ENCODE measurements at regions of chr5 and their contacts with region 1.

Region 1: DNA sequence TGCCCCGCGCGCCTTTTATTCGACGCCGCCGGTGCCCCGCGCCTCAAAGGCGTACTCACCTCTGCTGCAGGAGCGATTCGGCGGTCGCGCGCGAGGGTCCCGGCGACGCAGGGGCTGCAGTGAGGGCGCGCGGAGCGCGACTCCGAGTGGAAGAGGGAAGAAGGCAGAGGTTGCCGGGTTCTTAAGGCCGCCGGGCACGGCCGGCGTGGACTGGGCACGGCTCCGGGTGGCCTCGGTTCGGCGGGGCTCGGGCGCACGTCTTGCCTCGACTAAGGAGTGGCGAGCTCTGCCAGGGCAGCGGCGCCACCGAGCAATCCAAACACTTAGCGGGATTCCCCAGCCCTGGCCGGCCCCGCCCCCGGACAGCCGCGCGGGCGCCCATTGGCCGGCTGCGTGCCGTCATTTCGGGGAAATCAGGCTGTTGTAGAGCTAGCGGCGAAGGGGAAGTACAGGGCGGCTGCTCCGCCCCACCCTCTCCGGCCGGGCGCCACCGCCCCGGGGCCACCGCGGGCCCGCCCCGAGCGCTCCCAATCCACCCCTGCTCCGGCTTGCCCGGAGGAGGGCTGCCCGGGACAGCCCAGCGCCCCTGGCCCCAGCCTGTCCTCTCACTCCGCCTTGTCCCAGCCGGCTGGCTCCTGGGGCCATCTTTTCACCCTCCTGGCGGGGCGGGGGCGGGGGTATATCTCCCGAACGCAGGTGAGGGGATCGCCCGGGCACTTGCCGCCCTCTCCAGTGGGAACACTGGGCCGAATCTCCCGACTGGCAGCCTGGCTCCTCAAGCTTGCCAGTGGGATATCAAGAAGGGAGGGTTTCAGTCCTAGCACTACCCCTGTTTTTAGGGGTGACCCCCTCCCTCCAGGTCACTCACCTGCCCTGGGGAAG is at the start of gene IRF1:
- DNase-seq: peak; percentile 97
- H3K4me3 ChIP-seq: peak within 1 kb of the TSS; percentile 67 to 93 (median 87)
- H3K27ac ChIP-seq: peak within 1 kb of the TSS; percentile 92 to 99 (median 97)
- H3K4me1 ChIP-seq: peaks cover 33 to 60% of the 10 kb centered on the region in 2 donors
- H3K27me3 ChIP-seq: no peaks in the 10 kb centered on the region
- CTCF ChIP-seq: no peak
- POLR2A ChIP-seq: peak; percentile 87 to 99
- total RNA-seq, gene IRF1: 24.6 to 49.7 (median 32.1) TPM

Region 2: DNA sequence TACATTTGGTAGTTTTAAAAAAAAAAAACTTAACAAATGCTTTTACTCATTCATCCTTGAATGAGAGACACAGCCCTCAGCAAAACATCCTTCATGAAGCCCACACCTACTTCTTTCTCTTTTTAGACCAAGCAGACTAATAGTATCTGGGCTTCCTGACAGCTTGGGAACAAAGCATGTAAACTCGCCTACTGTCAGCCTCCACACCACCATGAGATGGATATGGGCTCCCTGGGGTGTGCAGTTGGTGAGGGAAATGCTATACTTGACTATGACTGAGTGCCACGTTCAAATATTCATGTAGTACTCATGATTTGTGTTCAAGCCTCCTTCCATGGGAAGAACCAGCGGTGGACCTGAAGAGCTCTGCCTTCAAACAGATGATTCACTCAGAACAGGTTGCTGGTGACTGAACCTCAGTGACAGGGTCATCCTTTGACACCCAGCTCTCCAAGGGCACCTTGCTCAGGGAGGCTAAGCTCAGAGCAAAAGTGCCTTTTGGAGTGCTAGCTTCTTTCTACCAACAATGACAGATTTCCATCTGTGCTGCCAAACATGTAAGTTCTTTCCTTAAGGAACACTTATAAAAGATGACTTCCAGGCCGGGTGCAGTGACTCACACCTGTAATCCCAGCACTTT is 84.5 kb before region 1 on chr5:
- intact Hi-C with region 1: loop called (anchors 5 kb)
- DNase-seq: no peak
- H3K4me3 ChIP-seq: no peak overlapping the region
- H3K27ac ChIP-seq: no peak overlapping the region
- H3K4me1 ChIP-seq: peaks cover 11 to 15% of the 10 kb centered on the region in 2 donors
- H3K27me3 ChIP-seq: no peaks in the 10 kb centered on the region
- CTCF ChIP-seq: no peak
- POLR2A ChIP-seq: no peak

Region 3: GRCh38 chr5:132419502-132420468 is 70.9 kb before region 1 on chr5:
- intact Hi-C with region 1: loop called (anchors 5 kb)
- DNase-seq: peak; percentile 96
- H3K4me3 ChIP-seq: no peak overlapping the region
- H3K27ac ChIP-seq: peak overlapping the region; percentile 40 to 75 (median 43)
- H3K4me1 ChIP-seq: peaks cover 45 to 85% of the 10 kb centered on the region in 2 donors
- H3K27me3 ChIP-seq: no peaks in the 10 kb centered on the region
- CTCF ChIP-seq: peak; percentile 72 to 95 (median 88)
- POLR2A ChIP-seq: no peak

Region 4: DNA sequence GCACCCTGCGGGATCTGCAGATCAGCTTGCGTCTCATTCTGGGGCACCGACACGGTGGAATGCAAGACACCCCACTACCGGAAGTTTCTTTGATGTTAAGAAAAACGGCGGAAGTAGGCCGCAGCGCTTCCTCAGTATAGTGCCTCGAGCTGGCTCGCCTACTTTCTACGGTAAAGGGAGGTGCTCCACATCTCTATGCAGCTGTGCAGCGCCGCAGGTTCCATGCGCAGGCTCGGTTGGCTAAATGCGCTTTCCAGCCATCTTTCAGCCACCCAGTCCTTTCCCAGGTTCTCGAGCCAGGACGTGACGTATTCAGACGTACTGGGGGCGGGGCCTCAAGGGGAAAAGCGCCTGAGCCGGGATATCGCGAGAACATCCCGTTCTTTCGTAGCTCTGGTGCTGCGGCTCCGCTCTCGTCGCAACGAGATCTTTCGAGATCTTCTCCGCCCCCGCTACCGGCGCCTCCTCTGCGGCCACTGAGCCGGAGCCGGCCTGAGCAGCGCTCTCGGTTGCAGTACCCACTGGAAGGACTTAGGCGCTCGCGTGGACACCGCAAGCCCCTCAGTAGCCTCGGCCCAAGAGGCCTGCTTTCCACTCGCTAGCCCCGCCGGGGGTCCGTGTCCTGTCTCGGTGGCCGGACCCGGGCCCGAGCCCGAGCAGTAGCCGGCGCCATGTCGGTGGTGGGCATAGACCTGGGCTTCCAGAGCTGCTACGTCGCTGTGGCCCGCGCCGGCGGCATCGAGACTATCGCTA is 561.0 kb after region 1 on chr5 and contains the start of gene HSPA4:
- intact Hi-C with region 1: loop called (anchors 10 kb)
- DNase-seq: peak; percentile 98 to 99
- H3K4me3 ChIP-seq: peak within 1 kb of the TSS; percentile 77 to 99 (median 99)
- H3K27ac ChIP-seq: peak within 1 kb of the TSS; percentile 95 to 100 (median 100)
- H3K4me1 ChIP-seq: peaks cover 13 to 27% of the 10 kb centered on the region in 2 donors
- H3K27me3 ChIP-seq: no peaks in the 10 kb centered on the region
- CTCF ChIP-seq: no peak
- POLR2A ChIP-seq: peak; percentile 79 to 97
- total RNA-seq, gene HSPA4: 49.9 to 72.0 (median 70.5) TPM

Measured in thyroid gland (tissue), 4 donors.